PC-9 (cell line): ENCODE measurements at regions of chr1 and their contacts with region 1.

Region 1: GRCh38 chr1:182845379-182845778 is 6.2 kb downstream of the DHX9 start:
- DNase-seq: no peak
- H3K4me3 ChIP-seq: no peak overlapping the region
- H3K27ac ChIP-seq: no peak overlapping the region
- H3K4me1 ChIP-seq: peaks cover 21% of the 10 kb centered on the region
- H3K27me3 ChIP-seq: no peaks in the 10 kb centered on the region
- CTCF ChIP-seq: no peak

Region 2: GRCh38 chr1:182330303-182330702 is 515.1 kb before region 1 on chr1:
- CTCF ChIA-PET with region 1: no interaction called
- POLR2A ChIA-PET with region 1: no interaction called
- intact Hi-C with region 1: no loop called
- DNase-seq: no peak
- H3K4me3 ChIP-seq: no peak overlapping the region
- H3K27ac ChIP-seq: no peak overlapping the region
- H3K4me1 ChIP-seq: no peaks in the 10 kb centered on the region
- H3K27me3 ChIP-seq: no peaks in the 10 kb centered on the region
- CTCF ChIP-seq: no peak

Region 3: GRCh38 chr1:182811975-182812725 is 33.2 kb before region 1 on chr1:
- CTCF ChIA-PET with region 1: no interaction called
- POLR2A ChIA-PET with region 1: no interaction called
- intact Hi-C with region 1: no loop called
- DNase-seq: no peak
- H3K4me3 ChIP-seq: no peak overlapping the region
- H3K27ac ChIP-seq: no peak overlapping the region
- H3K4me1 ChIP-seq: no peaks in the 10 kb centered on the region
- H3K27me3 ChIP-seq: no peaks in the 10 kb centered on the region
- CTCF ChIP-seq: no peak

Region 4: DNA sequence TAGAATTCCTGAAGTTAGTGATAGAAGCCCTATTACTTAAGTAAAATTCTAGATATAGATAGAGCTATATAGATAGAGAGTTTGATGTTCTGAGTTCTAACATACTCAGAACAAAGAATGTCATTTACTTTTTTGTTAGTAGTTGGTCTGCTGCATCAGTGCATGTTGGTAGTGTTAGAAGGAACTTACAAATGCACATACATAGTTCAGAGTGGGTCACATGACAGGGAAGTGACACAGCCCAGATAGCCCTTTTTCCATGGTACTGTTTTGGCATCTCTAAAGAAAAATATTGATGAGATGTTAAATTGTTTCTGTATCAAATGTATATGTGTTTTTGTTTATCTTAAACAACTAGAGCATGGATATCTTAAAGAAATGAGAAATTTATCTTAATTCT is 39.5 kb after region 1 on chr1:
- CTCF ChIA-PET with region 1: no interaction called
- POLR2A ChIA-PET with region 1: no interaction called
- intact Hi-C with region 1: loop called (anchors 5 kb)
- DNase-seq: no peak
- H3K4me3 ChIP-seq: no peak overlapping the region
- H3K27ac ChIP-seq: no peak overlapping the region
- H3K4me1 ChIP-seq: no peaks in the 10 kb centered on the region
- H3K27me3 ChIP-seq: no peaks in the 10 kb centered on the region
- CTCF ChIP-seq: no peak